Naive thymus-derived CD4-positive, alpha-beta T cell (primary cell): ENCODE measurements at regions of chr3 and their contacts with region 1.

Region 1: DNA sequence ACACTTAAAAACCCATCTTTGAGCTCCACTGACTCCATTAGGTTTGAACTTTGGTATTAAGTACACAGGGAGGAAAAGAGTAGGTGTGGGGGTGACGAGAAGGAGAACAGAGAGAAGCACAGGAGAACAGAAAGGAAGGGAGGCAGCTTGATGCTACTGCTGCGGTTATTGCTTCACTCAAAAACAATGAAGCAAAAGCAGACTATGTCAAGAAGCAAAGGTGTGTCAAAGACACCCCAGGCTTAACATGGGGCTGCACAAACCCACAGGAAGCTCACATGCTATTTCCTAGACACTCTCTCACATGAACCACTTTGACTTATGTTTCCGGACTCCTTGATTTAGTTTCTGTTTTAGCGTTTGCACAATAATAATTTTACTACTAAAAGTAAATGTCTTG is 961.0 kb upstream of the CFAP20DC start:
- DNase-seq: peak; percentile 17 to 93 (median 88)
- ATAC-seq: peak; percentile 98
- H3K4me3 ChIP-seq: peak overlapping the region; percentile 47
- H3K4me3 Mint-ChIP-seq: peak overlapping the region; percentile 78 to 97 (median 84)
- H3K27ac ChIP-seq: peak overlapping the region; percentile 77
- H3K27ac Mint-ChIP-seq: peak overlapping the region; percentile 91 to 100 (median 95)
- H3K4me1 ChIP-seq: peaks cover 57 to 91% of the 10 kb centered on the region in 2 donors
- H3K4me1 Mint-ChIP-seq: peaks cover 29 to 100% (median 91%) of the 10 kb centered on the region in 7 donors
- H3K27me3 ChIP-seq: no peaks in the 10 kb centered on the region
- H3K27me3 Mint-ChIP-seq: no peaks in the 10 kb centered on the region

Region 2: DNA sequence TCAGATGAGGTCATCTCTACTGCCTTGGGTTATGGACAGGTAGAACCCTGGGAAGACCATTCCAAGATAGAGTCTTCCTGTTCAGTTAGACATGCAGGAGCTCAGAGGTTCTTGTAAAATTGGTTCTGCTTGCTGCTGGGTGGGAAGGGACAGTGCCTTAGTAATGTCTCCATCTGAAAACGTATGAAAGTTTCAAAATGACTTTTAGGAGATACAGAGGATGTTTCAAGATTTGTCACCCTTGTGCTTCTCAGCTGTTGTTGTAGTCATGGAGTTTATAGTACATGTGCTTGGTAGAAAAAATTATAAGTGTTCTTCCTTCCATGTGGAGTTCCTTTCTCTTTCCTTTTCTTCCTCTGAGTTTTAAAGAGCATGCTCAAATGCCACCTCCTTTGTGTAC is 75.8 kb before region 1 on chr3:
- CTCF ChIA-PET with region 1: interaction called, 3 read pairs
- POLR2A ChIA-PET with region 1: interaction called, 4 read pairs
- intact Hi-C with region 1: loop called in 1 of 2 experiments (anchors 2 kb)
- DNase-seq: peak in 1 of 9 donors; percentile 24
- ATAC-seq: no peak
- H3K4me3 ChIP-seq: no peak overlapping the region
- H3K4me3 Mint-ChIP-seq: peak overlapping the region; percentile 0 to 52 (median 36)
- H3K27ac ChIP-seq: no peak overlapping the region
- H3K27ac Mint-ChIP-seq: peak overlapping the region; percentile 69 to 91 (median 80)
- H3K4me1 ChIP-seq: peaks cover 5 to 74% of the 10 kb centered on the region in 2 donors
- H3K4me1 Mint-ChIP-seq: peaks cover 27 to 100% (median 96%) of the 10 kb centered on the region in 7 donors
- H3K27me3 ChIP-seq: no peaks in the 10 kb centered on the region
- H3K27me3 Mint-ChIP-seq: no peaks in the 10 kb centered on the region

Region 3: GRCh38 chr3:59992578-59992977 is 18.2 kb before region 1 on chr3:
- CTCF ChIA-PET with region 1: no interaction called
- POLR2A ChIA-PET with region 1: interaction called, 48 read pairs
- intact Hi-C with region 1: loop called in 1 of 2 experiments (anchors 1 kb)
- DNase-seq: peak in 1 of 9 donors; percentile 25
- ATAC-seq: no peak
- H3K4me3 ChIP-seq: no peak overlapping the region
- H3K4me3 Mint-ChIP-seq: peak overlapping the region in 7 of 10 donors; percentile 43 to 66 (median 57)
- H3K27ac ChIP-seq: peak overlapping the region; percentile 34
- H3K27ac Mint-ChIP-seq: peak overlapping the region in 8 of 9 donors; percentile 67 to 89 (median 82)
- H3K4me1 ChIP-seq: peaks cover 0 to 88% of the 10 kb centered on the region in 2 donors
- H3K4me1 Mint-ChIP-seq: peaks cover 39 to 100% (median 99%) of the 10 kb centered on the region in 7 donors
- H3K27me3 ChIP-seq: no peaks in the 10 kb centered on the region
- H3K27me3 Mint-ChIP-seq: no peaks in the 10 kb centered on the region

Region 4: GRCh38 chr3:60025096-60026050 is 14.6 kb after region 1 on chr3:
- CTCF ChIA-PET with region 1: interaction called, 10 read pairs
- POLR2A ChIA-PET with region 1: interaction called, 75 read pairs
- intact Hi-C with region 1: loop called in 1 of 2 experiments (anchors 1 kb)
- DNase-seq: no peak
- ATAC-seq: no peak
- H3K4me3 ChIP-seq: no peak overlapping the region
- H3K4me3 Mint-ChIP-seq: peak overlapping the region; percentile 35 to 82 (median 62)
- H3K27ac ChIP-seq: peak overlapping the region; percentile 61
- H3K27ac Mint-ChIP-seq: peak overlapping the region; percentile 56 to 96 (median 89)
- H3K4me1 ChIP-seq: peaks cover 0 to 69% of the 10 kb centered on the region in 2 donors
- H3K4me1 Mint-ChIP-seq: peaks cover 29 to 100% (median 95%) of the 10 kb centered on the region in 7 donors
- H3K27me3 ChIP-seq: no peaks in the 10 kb centered on the region
- H3K27me3 Mint-ChIP-seq: no peaks in the 10 kb centered on the region

Region 5: GRCh38 chr3:60064210-60065178 is 53.7 kb after region 1 on chr3:
- CTCF ChIA-PET with region 1: interaction called, 4 read pairs
- POLR2A ChIA-PET with region 1: interaction called, 62 read pairs
- intact Hi-C with region 1: loop called (anchors 1 to 5 kb)
- DNase-seq: peak in 3 of 9 donors; percentile 48 to 52 (median 48)
- ATAC-seq: peak; percentile 77
- H3K4me3 ChIP-seq: peak overlapping the region; percentile 25
- H3K4me3 Mint-ChIP-seq: peak overlapping the region; percentile 5 to 81 (median 74)
- H3K27ac ChIP-seq: peak overlapping the region; percentile 71
- H3K27ac Mint-ChIP-seq: peak overlapping the region; percentile 88 to 99 (median 96)
- H3K4me1 ChIP-seq: peaks cover 17 to 68% of the 10 kb centered on the region in 2 donors
- H3K4me1 Mint-ChIP-seq: peaks cover 28 to 96% (median 87%) of the 10 kb centered on the region in 7 donors
- H3K27me3 ChIP-seq: no peaks in the 10 kb centered on the region
- H3K27me3 Mint-ChIP-seq: no peaks in the 10 kb centered on the region